ENCODE measurements at regions of chr7 and their contacts with region 1.

Region 1: DNA sequence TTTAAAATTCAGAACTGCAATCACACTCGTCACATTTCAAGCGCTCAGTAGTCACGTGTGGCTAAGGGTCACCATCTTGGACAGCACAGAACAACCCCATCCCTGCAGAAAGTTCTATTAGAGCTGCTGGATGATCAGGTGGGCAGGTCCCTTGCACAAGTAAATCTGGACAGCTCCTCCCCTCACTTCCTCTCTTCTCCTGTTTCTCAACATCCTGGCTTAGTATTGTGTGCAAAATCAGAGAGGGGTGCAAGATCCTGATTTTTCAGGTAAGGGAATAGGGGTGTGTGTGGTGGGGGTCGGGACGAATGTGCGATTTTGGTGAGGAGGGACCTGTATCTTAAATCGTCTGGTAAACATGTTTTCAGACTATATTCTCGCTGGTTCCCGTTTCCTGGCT is at the start of gene GIMAP4:
- DNase-seq: peak in 4 of 5 donors; percentile 35 to 50 (median 37)
- H3K4me3 ChIP-seq: peak within 1 kb of the TSS; percentile 92 to 96
- H3K4me3 Mint-ChIP-seq: peak within 1 kb of the TSS; percentile 98 to 100 (median 100)
- H3K27ac ChIP-seq: peak within 1 kb of the TSS; percentile 70
- H3K27ac Mint-ChIP-seq: peak within 1 kb of the TSS; percentile 86 to 99 (median 96)
- H3K4me1 ChIP-seq: peaks cover 73% of the 10 kb centered on the region
- H3K4me1 Mint-ChIP-seq: peaks cover 49 to 80% (median 63%) of the 10 kb centered on the region in 4 donors
- H3K27me3 ChIP-seq: no peaks in the 10 kb centered on the region
- H3K27me3 Mint-ChIP-seq: no peaks in the 10 kb centered on the region
- total RNA-seq, gene GIMAP4: 418 to 448 TPM

Region 2: GRCh38 chr7:150502519-150502918 is 64.7 kb before region 1 on chr7:
- CTCF ChIA-PET with region 1: interaction called, 3 read pairs
- POLR2A ChIA-PET with region 1: interaction called, 27 read pairs
- intact Hi-C with region 1: no loop called
- DNase-seq: peak; percentile 56 to 75 (median 67)
- H3K4me3 ChIP-seq: no peak overlapping the region
- H3K4me3 Mint-ChIP-seq: peak overlapping the region; percentile 22 to 86 (median 73)
- H3K27ac ChIP-seq: peak overlapping the region; percentile 51
- H3K27ac Mint-ChIP-seq: peak overlapping the region; percentile 84 to 99 (median 92)
- H3K4me1 ChIP-seq: peaks cover 53% of the 10 kb centered on the region
- H3K4me1 Mint-ChIP-seq: peaks cover 66 to 94% (median 81%) of the 10 kb centered on the region in 4 donors
- H3K27me3 ChIP-seq: no peaks in the 10 kb centered on the region
- H3K27me3 Mint-ChIP-seq: no peaks in the 10 kb centered on the region

Region 3: GRCh38 chr7:150556521-150557138 is 10.5 kb before region 1 on chr7:
- CTCF ChIA-PET with region 1: interaction called, 13 read pairs
- POLR2A ChIA-PET with region 1: interaction called, 120 read pairs
- intact Hi-C with region 1: loop called (anchors 1 kb)
- DNase-seq: peak in 4 of 5 donors; percentile 53 to 76 (median 72)
- H3K4me3 ChIP-seq: peak overlapping the region in 1 of 2 donors; percentile 4
- H3K4me3 Mint-ChIP-seq: peak overlapping the region; percentile 34 to 87 (median 78)
- H3K27ac ChIP-seq: peak overlapping the region; percentile 40
- H3K27ac Mint-ChIP-seq: peak overlapping the region; percentile 79 to 96 (median 94)
- H3K4me1 ChIP-seq: peaks cover 64% of the 10 kb centered on the region
- H3K4me1 Mint-ChIP-seq: peaks cover 53 to 87% (median 72%) of the 10 kb centered on the region in 4 donors
- H3K27me3 ChIP-seq: no peaks in the 10 kb centered on the region
- H3K27me3 Mint-ChIP-seq: no peaks in the 10 kb centered on the region

Region 4: DNA sequence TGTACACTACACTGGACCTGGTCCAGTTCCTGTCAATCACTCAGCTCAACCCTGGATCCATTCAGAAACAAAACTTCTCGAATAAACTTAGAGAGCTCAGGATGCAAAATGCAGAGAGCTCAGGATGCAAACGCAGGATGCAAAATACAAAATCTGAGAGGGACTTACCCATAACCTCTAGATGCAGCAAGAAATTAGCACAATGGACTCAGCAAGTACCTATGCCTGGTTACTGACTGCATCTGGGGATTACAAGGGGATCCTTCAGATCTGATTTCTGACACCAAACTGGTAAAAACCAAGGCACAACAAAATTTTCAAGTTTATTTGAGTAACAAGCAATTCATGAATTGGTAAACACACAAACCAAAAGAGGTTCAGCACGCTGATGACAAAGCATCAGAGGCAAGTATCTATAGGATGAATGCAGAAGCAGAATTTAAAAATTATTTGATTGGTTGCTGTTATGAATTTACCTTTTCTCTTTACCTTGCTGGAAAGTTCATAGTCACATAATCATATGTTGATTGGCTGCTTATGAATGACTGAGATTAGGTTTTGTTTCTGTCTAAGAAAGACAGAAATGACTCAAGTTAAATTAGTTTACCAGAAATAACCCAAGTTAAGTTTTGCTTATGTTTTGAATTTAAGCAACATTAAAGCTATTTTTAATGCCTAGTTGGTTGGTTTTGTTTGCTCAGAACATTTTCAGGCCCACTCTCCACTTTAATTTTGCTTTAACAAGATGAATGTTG is 53.6 kb after region 1 on chr7:
- CTCF ChIA-PET with region 1: interaction called, 13 read pairs
- POLR2A ChIA-PET with region 1: interaction called, 219 read pairs
- intact Hi-C with region 1: no loop called
- DNase-seq: no peak
- H3K4me3 ChIP-seq: no peak overlapping the region
- H3K4me3 Mint-ChIP-seq: peak overlapping the region; percentile 2 to 63 (median 44)
- H3K27ac ChIP-seq: no peak overlapping the region
- H3K27ac Mint-ChIP-seq: peak overlapping the region; percentile 70 to 92 (median 86)
- H3K4me1 ChIP-seq: peaks cover 41% of the 10 kb centered on the region
- H3K4me1 Mint-ChIP-seq: peaks cover 42 to 61% (median 54%) of the 10 kb centered on the region in 4 donors
- H3K27me3 ChIP-seq: no peaks in the 10 kb centered on the region
- H3K27me3 Mint-ChIP-seq: no peaks in the 10 kb centered on the region

Region 5: GRCh38 chr7:150685219-150686029 is 118.3 kb after region 1 on chr7 and contains the start of gene GIMAP2:
- CTCF ChIA-PET with region 1: interaction called, 24 read pairs
- POLR2A ChIA-PET with region 1: interaction called, 119 read pairs
- intact Hi-C with region 1: loop called (anchors 2 kb)
- DNase-seq: peak; percentile 64 to 69 (median 65)
- H3K4me3 ChIP-seq: peak within 1 kb of the TSS; percentile 80 to 97
- H3K4me3 Mint-ChIP-seq: peak within 1 kb of the TSS; percentile 94 to 99 (median 98)
- H3K27ac ChIP-seq: peak within 1 kb of the TSS; percentile 90
- H3K27ac Mint-ChIP-seq: peak within 1 kb of the TSS; percentile 90 to 99 (median 97)
- H3K4me1 ChIP-seq: peaks cover 60% of the 10 kb centered on the region
- H3K4me1 Mint-ChIP-seq: peaks cover 55 to 97% (median 74%) of the 10 kb centered on the region in 4 donors
- H3K27me3 ChIP-seq: no peaks in the 10 kb centered on the region
- H3K27me3 Mint-ChIP-seq: no peaks in the 10 kb centered on the region
- total RNA-seq, gene GIMAP2: 238 to 244 TPM

Region 6: DNA sequence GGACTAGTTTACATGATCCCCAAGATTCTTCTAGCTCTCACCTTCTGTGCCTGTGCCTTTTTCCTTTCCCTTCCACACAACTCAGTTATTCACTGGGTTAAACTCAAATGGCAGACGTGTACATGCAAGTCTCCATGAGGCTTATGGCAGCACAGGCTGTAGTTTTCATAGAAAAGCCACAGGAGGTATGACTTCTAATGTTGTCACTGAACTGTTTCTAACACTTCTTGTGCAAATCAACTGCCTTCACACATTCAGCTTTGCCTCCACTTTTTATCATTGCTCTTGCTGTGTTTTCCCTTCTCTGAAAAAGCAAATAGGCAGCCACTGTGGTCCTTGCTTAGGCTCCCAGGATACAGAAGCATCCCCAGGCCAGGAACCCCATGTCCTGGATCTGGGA is 164.7 kb after region 1 on chr7:
- CTCF ChIA-PET with region 1: interaction called, 3 read pairs
- POLR2A ChIA-PET with region 1: interaction called, 85 read pairs
- intact Hi-C with region 1: no loop called
- DNase-seq: no peak
- H3K4me3 ChIP-seq: no peak overlapping the region
- H3K4me3 Mint-ChIP-seq: peak overlapping the region; percentile 9 to 95 (median 64)
- H3K27ac ChIP-seq: peak overlapping the region; percentile 6
- H3K27ac Mint-ChIP-seq: peak overlapping the region; percentile 86 to 97 (median 91)
- H3K4me1 ChIP-seq: peaks cover 76% of the 10 kb centered on the region
- H3K4me1 Mint-ChIP-seq: peaks cover 71 to 87% (median 76%) of the 10 kb centered on the region in 4 donors
- H3K27me3 ChIP-seq: no peaks in the 10 kb centered on the region
- H3K27me3 Mint-ChIP-seq: no peaks in the 10 kb centered on the region

Region 7: GRCh38 chr7:150852371-150852920 is 285.3 kb after region 1 on chr7 and contains the start of gene AOC1:
- CTCF ChIA-PET with region 1: no interaction called
- POLR2A ChIA-PET with region 1: no interaction called
- intact Hi-C with region 1: no loop called
- DNase-seq: no peak
- H3K4me3 ChIP-seq: no peak within 1 kb of the TSS
- H3K4me3 Mint-ChIP-seq: peak within 1 kb of the TSS in 1 of 8 donors; percentile 7
- H3K27ac ChIP-seq: no peak within 1 kb of the TSS
- H3K27ac Mint-ChIP-seq: no peak within 1 kb of the TSS
- H3K4me1 ChIP-seq: no peaks in the 10 kb centered on the region
- H3K4me1 Mint-ChIP-seq: peaks cover 0 to 6% (median 0%) of the 10 kb centered on the region in 4 donors
- H3K27me3 ChIP-seq: peaks cover 7% of the 10 kb centered on the region
- H3K27me3 Mint-ChIP-seq: peaks cover 24 to 27% of the 10 kb centered on the region in 2 donors
- total RNA-seq, gene AOC1: not detected

Measured in CD4-positive, alpha-beta memory T cell (primary cell).